CD4-positive, alpha-beta T cell (primary cell): ENCODE measurements at regions of chr19 and their contacts with region 1.

Region 1: GRCh38 chr19:40716655-40717324 is at the starts of genes COQ8B and ITPKC:
- DNase-seq: peak; percentile 98 to 100 (median 99)
- ATAC-seq: peak; percentile 73
- H3K4me3 ChIP-seq: peak within 1 kb of the TSS; percentile 89
- H3K4me3 Mint-ChIP-seq: peak within 1 kb of the TSS; percentile 95
- H3K27ac ChIP-seq: peak within 1 kb of the TSS; percentile 89 to 96
- H3K27ac Mint-ChIP-seq: peak within 1 kb of the TSS; percentile 94
- H3K4me1 ChIP-seq: peaks cover 70% of the 10 kb centered on the region
- H3K4me1 Mint-ChIP-seq: peaks cover 70% of the 10 kb centered on the region
- H3K27me3 ChIP-seq: no peaks in the 10 kb centered on the region
- H3K27me3 Mint-ChIP-seq: no peaks in the 10 kb centered on the region
- CTCF ChIP-seq: no peak
- total RNA-seq, gene COQ8B: 16.4 to 18.3 TPM
- total RNA-seq, gene ITPKC: 3.7 to 4.5 TPM

Region 2: GRCh38 chr19:40241809-40242384 is 474.9 kb before region 1 on chr19:
- CTCF ChIA-PET with region 1: no interaction called
- POLR2A ChIA-PET with region 1: no interaction called
- intact Hi-C with region 1: no loop called
- DNase-seq: no peak
- ATAC-seq: no peak
- H3K4me3 ChIP-seq: no peak overlapping the region
- H3K4me3 Mint-ChIP-seq: no peak overlapping the region
- H3K27ac ChIP-seq: no peak overlapping the region
- H3K27ac Mint-ChIP-seq: no peak overlapping the region
- H3K4me1 ChIP-seq: no peaks in the 10 kb centered on the region
- H3K4me1 Mint-ChIP-seq: peaks cover 4% of the 10 kb centered on the region
- H3K27me3 ChIP-seq: no peaks in the 10 kb centered on the region
- H3K27me3 Mint-ChIP-seq: no peaks in the 10 kb centered on the region
- CTCF ChIP-seq: no peak

Region 3: GRCh38 chr19:40398417-40399131 is 318.2 kb before region 1 on chr19:
- CTCF ChIA-PET with region 1: no interaction called
- POLR2A ChIA-PET with region 1: no interaction called
- intact Hi-C with region 1: no loop called
- DNase-seq: peak; percentile 42 to 84 (median 60)
- ATAC-seq: peak; percentile 84
- H3K4me3 ChIP-seq: no peak overlapping the region
- H3K4me3 Mint-ChIP-seq: peak overlapping the region; percentile 55
- H3K27ac ChIP-seq: no peak overlapping the region
- H3K27ac Mint-ChIP-seq: no peak overlapping the region
- H3K4me1 ChIP-seq: peaks cover 20% of the 10 kb centered on the region
- H3K4me1 Mint-ChIP-seq: peaks cover 26% of the 10 kb centered on the region
- H3K27me3 ChIP-seq: no peaks in the 10 kb centered on the region
- H3K27me3 Mint-ChIP-seq: no peaks in the 10 kb centered on the region
- CTCF ChIP-seq: no peak

Region 4: GRCh38 chr19:40690693-40691420 is 25.9 kb before region 1 on chr19:
- CTCF ChIA-PET with region 1: no interaction called
- POLR2A ChIA-PET with region 1: interaction called, 4 read pairs
- intact Hi-C with region 1: loop called (anchors 1 to 2 kb)
- DNase-seq: peak; percentile 72 to 95 (median 84)
- ATAC-seq: peak; percentile 85
- H3K4me3 ChIP-seq: peak overlapping the region; percentile 70
- H3K4me3 Mint-ChIP-seq: peak overlapping the region; percentile 94
- H3K27ac ChIP-seq: no peak overlapping the region
- H3K27ac Mint-ChIP-seq: peak overlapping the region; percentile 54
- H3K4me1 ChIP-seq: peaks cover 20% of the 10 kb centered on the region
- H3K4me1 Mint-ChIP-seq: peaks cover 6% of the 10 kb centered on the region
- H3K27me3 ChIP-seq: no peaks in the 10 kb centered on the region
- H3K27me3 Mint-ChIP-seq: no peaks in the 10 kb centered on the region
- CTCF ChIP-seq: no peak

Region 5: GRCh38 chr19:40702337-40703012 is 14.3 kb before region 1 on chr19:
- CTCF ChIA-PET with region 1: no interaction called
- POLR2A ChIA-PET with region 1: no interaction called
- intact Hi-C with region 1: no loop called
- DNase-seq: no peak
- ATAC-seq: no peak
- H3K4me3 ChIP-seq: no peak overlapping the region
- H3K4me3 Mint-ChIP-seq: no peak overlapping the region
- H3K27ac ChIP-seq: no peak overlapping the region
- H3K27ac Mint-ChIP-seq: no peak overlapping the region
- H3K4me1 ChIP-seq: no peaks in the 10 kb centered on the region
- H3K4me1 Mint-ChIP-seq: no peaks in the 10 kb centered on the region
- H3K27me3 ChIP-seq: no peaks in the 10 kb centered on the region
- H3K27me3 Mint-ChIP-seq: no peaks in the 10 kb centered on the region
- CTCF ChIP-seq: no peak

Region 6: DNA sequence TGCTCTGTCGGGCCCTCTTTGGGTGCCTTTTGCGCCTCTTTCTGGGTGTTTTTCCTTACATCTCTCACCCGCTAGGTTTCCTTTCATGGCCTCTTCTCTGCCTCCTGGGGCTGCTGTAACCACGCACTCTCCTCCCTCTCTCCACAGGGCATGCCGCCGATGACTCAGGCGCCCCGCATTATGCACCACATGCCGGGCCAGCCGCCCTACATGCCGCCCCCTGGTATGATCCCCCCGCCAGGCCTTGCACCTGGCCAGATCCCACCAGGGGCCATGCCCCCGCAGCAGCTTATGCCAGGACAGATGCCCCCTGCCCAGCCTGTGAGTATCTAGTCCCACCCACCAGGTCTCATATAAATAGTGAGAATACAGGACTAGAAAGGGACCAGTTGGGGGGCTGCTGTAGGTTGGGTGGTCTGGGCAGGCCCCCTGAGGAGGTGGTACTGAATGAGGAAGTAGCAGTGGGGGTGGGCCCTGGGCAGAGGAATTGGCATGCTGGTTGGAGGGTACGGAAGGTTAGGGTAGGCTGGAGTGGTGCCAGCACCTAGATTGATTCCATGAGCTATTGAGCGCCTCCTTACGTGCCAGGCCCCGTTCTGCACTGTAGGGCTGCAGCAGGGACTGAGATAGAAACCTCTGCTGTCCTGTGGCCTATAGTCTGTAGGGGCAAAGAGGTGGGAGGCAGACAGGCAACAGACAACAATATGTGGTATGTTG is 46.1 kb after region 1 on chr19:
- CTCF ChIA-PET with region 1: no interaction called
- POLR2A ChIA-PET with region 1: no interaction called
- intact Hi-C with region 1: no loop called
- DNase-seq: no peak
- ATAC-seq: no peak
- H3K4me3 ChIP-seq: no peak overlapping the region
- H3K4me3 Mint-ChIP-seq: no peak overlapping the region
- H3K27ac ChIP-seq: peak overlapping the region in 1 of 2 donors; percentile 4
- H3K27ac Mint-ChIP-seq: no peak overlapping the region
- H3K4me1 ChIP-seq: peaks cover 33% of the 10 kb centered on the region
- H3K4me1 Mint-ChIP-seq: peaks cover 36% of the 10 kb centered on the region
- H3K27me3 ChIP-seq: no peaks in the 10 kb centered on the region
- H3K27me3 Mint-ChIP-seq: no peaks in the 10 kb centered on the region
- CTCF ChIP-seq: no peak

Region 7: DNA sequence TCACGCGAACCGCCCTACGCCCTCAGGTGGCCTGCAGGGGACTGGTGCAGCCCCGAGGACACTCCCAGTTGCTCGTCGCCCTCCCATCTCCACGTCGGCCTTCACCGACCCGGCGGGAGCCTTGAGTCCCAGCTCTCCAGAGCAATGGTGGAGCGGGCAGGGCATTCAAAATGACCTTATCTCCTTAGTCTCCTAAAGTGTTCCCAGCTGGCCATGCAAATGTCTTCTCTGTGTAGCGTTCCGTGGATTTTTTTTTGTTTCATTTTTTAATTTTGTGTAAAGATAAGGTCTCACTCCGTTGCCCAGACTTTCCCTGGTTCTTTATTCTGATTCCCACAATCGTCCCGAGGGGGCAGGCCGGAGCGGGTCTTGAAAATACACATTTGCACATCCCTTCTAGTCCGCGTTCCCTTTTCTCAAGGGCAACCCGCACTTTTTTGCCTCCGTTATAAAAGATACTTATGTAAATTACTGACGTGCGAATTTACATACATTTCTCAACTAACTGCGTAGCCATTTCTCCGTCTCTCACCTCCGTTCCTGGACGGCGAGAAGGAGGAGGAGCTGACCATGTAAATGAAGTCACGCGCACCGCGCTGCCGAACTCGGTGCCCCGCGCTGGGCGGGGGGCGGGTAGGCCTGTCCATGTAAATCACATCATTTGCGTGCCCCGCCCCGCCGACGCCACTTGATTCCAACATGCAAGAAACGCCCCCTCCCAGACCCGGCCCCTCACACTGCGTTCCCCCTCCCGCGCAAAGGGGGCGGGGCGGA is 81.6 kb after region 1 on chr19:
- CTCF ChIA-PET with region 1: interaction called, 4 read pairs
- POLR2A ChIA-PET with region 1: interaction called, 4 read pairs
- intact Hi-C with region 1: loop called (anchors 2 kb)
- DNase-seq: peak; percentile 100
- ATAC-seq: peak; percentile 78
- H3K4me3 ChIP-seq: peak overlapping the region; percentile 64
- H3K4me3 Mint-ChIP-seq: peak overlapping the region; percentile 92
- H3K27ac ChIP-seq: peak overlapping the region; percentile 88 to 96
- H3K27ac Mint-ChIP-seq: peak overlapping the region; percentile 98
- H3K4me1 ChIP-seq: peaks cover 47% of the 10 kb centered on the region
- H3K4me1 Mint-ChIP-seq: peaks cover 45% of the 10 kb centered on the region
- H3K27me3 ChIP-seq: no peaks in the 10 kb centered on the region
- H3K27me3 Mint-ChIP-seq: no peaks in the 10 kb centered on the region
- CTCF ChIP-seq: peak; percentile 40

Region 8: GRCh38 chr19:40806488-40807468 is 90.0 kb after region 1 on chr19:
- CTCF ChIA-PET with region 1: interaction called, 7 read pairs
- POLR2A ChIA-PET with region 1: interaction called, 8 read pairs
- intact Hi-C with region 1: loop called in 1 of 2 experiments (anchors 2 kb)
- DNase-seq: peak; percentile 66 to 95 (median 75)
- ATAC-seq: peak; percentile 47
- H3K4me3 ChIP-seq: peak overlapping the region; percentile 24
- H3K4me3 Mint-ChIP-seq: peak overlapping the region; percentile 96
- H3K27ac ChIP-seq: peak overlapping the region; percentile 86 to 88
- H3K27ac Mint-ChIP-seq: peak overlapping the region; percentile 90
- H3K4me1 ChIP-seq: peaks cover 100% of the 10 kb centered on the region
- H3K4me1 Mint-ChIP-seq: peaks cover 85% of the 10 kb centered on the region
- H3K27me3 ChIP-seq: no peaks in the 10 kb centered on the region
- H3K27me3 Mint-ChIP-seq: no peaks in the 10 kb centered on the region
- CTCF ChIP-seq: peak; percentile 79